ENCODE measurements at regions of chr5 and their contacts with region 1.

Region 1: GRCh38 chr5:72816311-72817145 is at the start of gene TNPO1:
- DNase-seq: peak; percentile 88 to 91
- ATAC-seq: peak; percentile 87 to 89
- H3K4me3 ChIP-seq: peak within 1 kb of the TSS; percentile 71 to 90 (median 88)
- H3K27ac ChIP-seq: peak within 1 kb of the TSS; percentile 96 to 98 (median 98)
- H3K4me1 ChIP-seq: peaks cover 25 to 36% of the 10 kb centered on the region in 2 donors
- H3K27me3 ChIP-seq: no peaks in the 10 kb centered on the region
- CTCF ChIP-seq: no peak
- POLR2A ChIP-seq: peak; percentile 96 to 99
- total RNA-seq, gene TNPO1: 96.8 to 130 (median 111) TPM

Region 2: DNA sequence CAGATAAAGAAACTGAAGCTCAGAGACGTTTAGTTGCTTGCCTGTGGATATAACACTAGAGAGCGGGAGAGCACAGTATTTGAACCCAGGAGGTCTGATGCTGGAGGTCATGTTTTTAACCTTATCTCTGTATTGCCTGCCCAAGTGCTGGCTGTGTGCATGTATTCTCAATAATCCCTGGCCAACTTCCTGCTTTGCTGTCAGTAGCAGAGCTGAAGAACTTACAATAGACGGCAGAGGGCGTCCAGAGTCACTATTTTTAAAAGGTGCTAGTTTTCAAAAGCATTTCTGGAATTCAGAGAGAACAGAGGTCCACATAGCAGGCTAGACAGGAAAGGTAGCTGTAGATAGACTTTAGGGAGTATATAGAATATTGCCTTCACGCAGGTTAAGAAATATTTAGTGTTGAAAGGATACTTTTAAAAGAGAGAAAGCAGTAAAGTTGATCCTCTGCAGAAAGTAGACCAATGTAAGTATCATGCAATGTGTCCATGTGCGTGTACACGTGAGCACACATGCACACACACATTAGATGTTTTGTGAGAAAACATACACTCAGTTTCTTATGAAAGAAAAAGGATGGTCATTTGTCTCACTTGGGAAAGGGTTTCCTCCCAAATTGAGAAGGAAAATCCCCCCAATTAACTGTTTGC is 450.1 kb before region 1 on chr5:
- in situ Hi-C with region 1: loop called in 3 of 4 experiments (anchors 10 to 25 kb)
- intact Hi-C with region 1: loop called (anchors 5 kb)
- DNase-seq: peak; percentile 54 to 59
- ATAC-seq: peak; percentile 83 to 88
- H3K4me3 ChIP-seq: no peak overlapping the region
- H3K27ac ChIP-seq: peak overlapping the region in 2 of 4 donors; percentile 3 to 22
- H3K4me1 ChIP-seq: peaks cover 9 to 10% of the 10 kb centered on the region in 2 donors
- H3K27me3 ChIP-seq: no peaks in the 10 kb centered on the region
- CTCF ChIP-seq: peak; percentile 76 to 87 (median 82)
- POLR2A ChIP-seq: no peak

Region 3: DNA sequence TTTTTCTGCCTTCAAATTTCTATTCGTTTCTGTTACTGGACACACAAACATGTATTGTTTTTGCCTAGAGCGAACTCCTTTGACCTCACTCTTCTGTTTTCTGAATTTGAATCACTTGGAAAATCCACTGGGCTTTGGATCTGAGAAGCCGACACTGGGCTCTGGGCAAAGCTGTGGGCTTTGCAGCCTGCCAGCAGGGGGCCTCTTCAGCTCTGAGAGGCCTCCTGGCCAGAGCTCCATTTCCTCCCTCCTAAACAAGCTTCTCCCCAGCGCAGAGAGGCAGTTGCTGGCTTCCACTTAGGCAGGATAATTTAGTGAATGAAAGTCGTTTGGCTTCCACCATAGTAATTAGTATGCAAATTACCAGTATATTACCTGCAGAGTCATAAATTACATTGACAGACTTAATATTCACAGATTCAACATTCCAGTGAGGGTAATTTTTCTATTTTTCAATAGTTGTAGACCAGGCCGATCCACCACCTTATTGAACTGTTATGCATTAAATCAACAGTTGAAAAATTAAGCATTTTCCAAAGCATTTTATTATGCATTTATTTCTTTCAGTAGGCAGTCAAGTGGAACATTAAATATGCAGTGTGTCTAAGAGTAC is 205.3 kb before region 1 on chr5:
- in situ Hi-C with region 1: loop called in 3 of 4 experiments (anchors 10 to 25 kb)
- intact Hi-C with region 1: loop called (anchors 1 kb)
- DNase-seq: peak; percentile 55 to 75
- ATAC-seq: peak; percentile 95 to 99
- H3K4me3 ChIP-seq: peak overlapping the region in 1 of 4 donors; percentile 2
- H3K27ac ChIP-seq: peak overlapping the region in 1 of 4 donors; percentile 27
- H3K4me1 ChIP-seq: peaks cover 4 to 6% of the 10 kb centered on the region in 2 donors
- H3K27me3 ChIP-seq: no peaks in the 10 kb centered on the region
- CTCF ChIP-seq: peak; percentile 86 to 95 (median 93)
- POLR2A ChIP-seq: no peak

Region 4: GRCh38 chr5:72624641-72625236 is 191.8 kb before region 1 on chr5:
- in situ Hi-C with region 1: loop called (anchors 10 to 25 kb)
- intact Hi-C with region 1: loop called (anchors 2 kb)
- DNase-seq: peak; percentile 44 to 79
- ATAC-seq: peak; percentile 69 to 89
- H3K4me3 ChIP-seq: no peak overlapping the region
- H3K27ac ChIP-seq: peak overlapping the region; percentile 70 to 86 (median 78)
- H3K4me1 ChIP-seq: peaks cover 47 to 56% of the 10 kb centered on the region in 2 donors
- H3K27me3 ChIP-seq: no peaks in the 10 kb centered on the region
- CTCF ChIP-seq: no peak
- POLR2A ChIP-seq: no peak

Region 5: GRCh38 chr5:72955768-72956323 is 139.3 kb after region 1 on chr5 and contains the start of gene FCHO2:
- in situ Hi-C with region 1: no loop called
- intact Hi-C with region 1: loop called (anchors 2 kb)
- DNase-seq: peak; percentile 96 to 97
- ATAC-seq: peak; percentile 89 to 90
- H3K4me3 ChIP-seq: peak within 1 kb of the TSS; percentile 71 to 85 (median 80)
- H3K27ac ChIP-seq: peak within 1 kb of the TSS; percentile 92 to 97 (median 96)
- H3K4me1 ChIP-seq: peaks cover 41 to 43% of the 10 kb centered on the region in 2 donors
- H3K27me3 ChIP-seq: no peaks in the 10 kb centered on the region
- CTCF ChIP-seq: peak; percentile 72 to 93 (median 87)
- POLR2A ChIP-seq: peak; percentile 62 to 79
- total RNA-seq, gene FCHO2: 8.3 to 14.8 (median 12.3) TPM

Measured in gastrocnemius medialis (tissue), 4 donors.